Posterior cingulate gyrus (tissue), 11 donors: ENCODE measurements at regions of chr13 and their contacts with region 1.

Region 1: GRCh38 chr13:99200432-99201167 is at the start of gene UBAC2:
- DNase-seq: peak; percentile 86 to 99 (median 90)

Region 2: GRCh38 chr13:99093997-99094396 is 106.6 kb before region 1 on chr13:
- intact Hi-C with region 1: loop called (anchors 5 kb)
- DNase-seq: no peak

Region 3: DNA sequence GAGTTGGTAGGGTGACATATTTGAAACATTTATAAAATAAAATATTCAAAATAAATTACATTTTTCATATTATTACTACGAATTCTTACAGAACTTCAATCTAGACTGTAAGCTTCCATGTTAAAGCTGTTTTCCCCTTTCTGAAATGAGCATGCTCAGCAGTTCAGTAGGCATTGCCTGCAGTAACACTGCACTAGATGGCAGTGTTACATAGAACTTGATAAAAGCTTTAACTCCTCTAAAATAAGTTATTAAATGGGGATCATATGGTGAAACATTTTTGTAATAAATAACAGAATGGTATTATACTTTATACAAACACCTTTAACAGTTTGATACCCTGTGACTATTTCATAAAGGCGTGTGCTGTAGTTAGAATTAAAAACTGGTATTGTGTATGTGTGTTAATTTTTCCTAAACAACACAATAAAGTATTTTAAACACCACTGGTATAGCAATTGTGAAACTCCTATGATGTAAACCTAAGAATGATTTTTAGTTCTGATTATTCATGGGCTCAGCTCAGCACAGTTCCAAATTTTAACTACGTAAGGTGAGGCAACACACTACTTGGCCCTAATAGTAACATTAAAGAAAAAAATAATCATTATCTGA is 69.1 kb after region 1 on chr13:
- intact Hi-C with region 1: loop called (anchors 5 kb)
- DNase-seq: no peak

Region 4: DNA sequence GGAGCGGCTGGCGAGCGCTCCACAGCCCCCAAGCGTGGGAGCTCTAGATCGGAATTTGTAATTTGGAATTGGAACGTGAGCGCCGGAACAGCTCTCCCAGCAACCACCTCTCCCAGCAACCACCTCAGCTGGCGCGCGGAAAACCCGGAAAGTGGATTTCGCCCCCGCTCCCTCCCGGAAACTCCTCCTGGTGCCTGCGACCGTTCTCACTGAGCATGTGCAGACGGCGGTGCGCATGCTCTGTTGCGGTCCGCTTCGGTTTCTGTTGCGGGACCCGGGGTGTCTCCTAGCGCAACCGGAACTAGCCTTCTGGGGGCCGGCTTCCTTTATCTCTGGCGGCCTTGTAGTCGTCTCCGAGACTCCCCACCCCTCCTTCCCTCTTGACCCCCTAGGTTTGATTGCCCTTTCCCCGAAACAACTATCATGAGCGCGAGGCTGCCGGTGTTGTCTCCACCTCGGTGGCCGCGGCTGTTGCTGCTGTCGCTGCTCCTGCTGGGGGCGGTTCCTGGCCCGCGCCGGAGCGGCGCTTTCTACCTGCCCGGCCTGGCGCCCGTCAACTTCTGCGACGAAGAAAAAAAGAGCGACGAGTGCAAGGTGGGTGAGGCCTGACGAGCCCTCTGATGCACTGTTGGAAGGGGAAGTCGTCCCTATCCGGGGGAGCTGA is 300.7 kb after region 1 on chr13 and contains the start of gene TM9SF2:
- intact Hi-C with region 1: loop called (anchors 2 kb)
- DNase-seq: peak; percentile 90 to 99 (median 94)